MCF 10A (cell line): ENCODE measurements at regions of chr20 and their contacts with region 1.

Region 1: DNA sequence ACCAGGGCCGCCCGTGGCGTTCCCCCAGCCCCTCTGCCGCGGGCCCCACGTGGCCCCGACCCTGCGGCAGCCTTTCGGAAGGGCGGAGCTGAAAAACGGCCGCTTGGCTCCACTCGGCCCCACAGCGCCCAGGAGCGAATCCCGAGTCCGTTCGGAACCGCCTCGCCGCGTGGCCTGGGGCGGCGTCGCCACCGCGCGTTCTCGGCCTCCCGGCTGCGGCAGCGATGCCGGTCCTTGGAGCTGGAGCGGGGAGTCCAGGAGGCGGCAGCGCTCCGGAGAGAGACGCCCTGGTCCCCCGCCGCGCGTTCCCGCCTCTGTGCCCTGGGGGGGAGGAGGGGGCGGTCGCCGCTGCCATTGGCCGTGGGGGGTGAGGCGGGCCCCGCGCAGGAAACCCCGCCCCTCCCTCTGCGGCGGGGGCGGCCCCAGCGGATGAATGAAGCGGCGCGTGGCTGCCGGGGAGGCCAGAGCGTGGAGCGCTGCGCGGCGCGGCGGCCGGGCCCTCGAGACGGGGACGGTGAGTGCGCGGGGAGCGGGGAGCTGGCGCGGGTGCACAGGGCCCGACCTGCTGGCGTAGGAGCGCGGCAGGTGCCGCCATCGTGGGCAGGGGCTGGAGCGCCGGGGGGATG is at the start of gene SLCO4A1:
- DNase-seq: peak; percentile 80
- H3K4me3 Mint-ChIP-seq: peak within 1 kb of the TSS; percentile 72
- H3K27ac Mint-ChIP-seq: no peak within 1 kb of the TSS
- H3K4me1 Mint-ChIP-seq: peaks cover 7% of the 10 kb centered on the region
- H3K27me3 Mint-ChIP-seq: no peaks in the 10 kb centered on the region
- CTCF ChIP-seq: no peak
- total RNA-seq, gene SLCO4A1: 23.8 and 27.0 TPM in 2 replicates

Region 2: GRCh38 chr20:62437927-62438326 is 204.2 kb before region 1 on chr20:
- CTCF ChIA-PET with region 1: no interaction called
- POLR2A ChIA-PET with region 1: no interaction called
- intact Hi-C with region 1: no loop called
- DNase-seq: no peak
- H3K4me3 Mint-ChIP-seq: no peak overlapping the region
- H3K27ac Mint-ChIP-seq: no peak overlapping the region
- H3K4me1 Mint-ChIP-seq: no peaks in the 10 kb centered on the region
- H3K27me3 Mint-ChIP-seq: peaks cover 64% of the 10 kb centered on the region
- CTCF ChIP-seq: no peak

Region 3: GRCh38 chr20:62652051-62652926 is 10.1 kb after region 1 on chr20:
- CTCF ChIA-PET with region 1: interaction called, 8 read pairs
- POLR2A ChIA-PET with region 1: interaction called, 65 read pairs
- intact Hi-C with region 1: no loop called
- DNase-seq: peak; percentile 99
- H3K4me3 Mint-ChIP-seq: peak overlapping the region; percentile 72
- H3K27ac Mint-ChIP-seq: peak overlapping the region; percentile 98
- H3K4me1 Mint-ChIP-seq: peaks cover 11% of the 10 kb centered on the region
- H3K27me3 Mint-ChIP-seq: no peaks in the 10 kb centered on the region
- CTCF ChIP-seq: no peak

Region 4: DNA sequence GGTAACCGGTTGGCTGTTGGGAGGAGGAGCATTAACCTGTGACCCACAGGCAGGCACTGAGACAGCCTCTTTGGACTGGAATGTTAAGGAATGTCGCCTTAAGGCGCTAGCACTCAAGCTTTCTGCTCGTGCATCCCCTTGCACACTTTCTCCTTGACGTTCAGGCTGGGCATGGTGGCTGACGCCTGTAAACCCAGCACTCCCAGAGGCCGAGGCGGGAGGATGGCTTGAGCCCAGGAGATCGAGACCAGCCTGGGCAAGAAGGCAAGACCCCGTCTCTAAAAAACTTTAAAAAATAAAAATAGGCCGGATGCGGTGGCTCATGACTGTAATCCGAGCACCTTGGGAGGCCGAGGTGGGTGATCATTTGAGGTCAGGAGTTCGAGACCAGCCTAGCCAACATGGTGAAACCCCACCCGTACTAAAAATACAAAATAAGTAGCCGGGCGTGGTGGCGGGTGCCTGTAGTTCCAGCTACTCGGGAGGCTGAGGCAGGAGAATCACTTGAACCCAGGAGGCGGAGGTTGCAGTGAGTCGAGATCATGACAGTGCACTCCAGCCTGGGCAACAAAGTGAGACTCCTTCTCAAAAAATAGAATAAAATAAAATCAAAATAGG is 293.9 kb after region 1 on chr20:
- CTCF ChIA-PET with region 1: no interaction called
- POLR2A ChIA-PET with region 1: no interaction called
- intact Hi-C with region 1: no loop called
- DNase-seq: no peak
- H3K4me3 Mint-ChIP-seq: no peak overlapping the region
- H3K27ac Mint-ChIP-seq: no peak overlapping the region
- H3K4me1 Mint-ChIP-seq: peaks cover 15% of the 10 kb centered on the region
- H3K27me3 Mint-ChIP-seq: no peaks in the 10 kb centered on the region
- CTCF ChIP-seq: no peak